ENCODE measurements at regions of chr12 and their contacts with region 1.

Region 1: GRCh38 chr12:119338593-119339363 is 4.2 kb downstream of the CCDC60 start:
- DNase-seq: no peak
- H3K4me3 ChIP-seq: no peak overlapping the region
- H3K27ac ChIP-seq: no peak overlapping the region
- H3K4me1 ChIP-seq: peaks cover 0 to 8% (median 3%) of the 10 kb centered on the region in 4 experiments; a peak in 3 of 7 replicates
- H3K27me3 ChIP-seq: peaks cover 26 to 61% (median 57%) of the 10 kb centered on the region in 4 experiments
- CTCF ChIP-seq: no peak
- EP300 ChIP-seq: no peak
- POLR2A ChIP-seq: no peak
- RAD21 ChIP-seq: no peak

Region 2: DNA sequence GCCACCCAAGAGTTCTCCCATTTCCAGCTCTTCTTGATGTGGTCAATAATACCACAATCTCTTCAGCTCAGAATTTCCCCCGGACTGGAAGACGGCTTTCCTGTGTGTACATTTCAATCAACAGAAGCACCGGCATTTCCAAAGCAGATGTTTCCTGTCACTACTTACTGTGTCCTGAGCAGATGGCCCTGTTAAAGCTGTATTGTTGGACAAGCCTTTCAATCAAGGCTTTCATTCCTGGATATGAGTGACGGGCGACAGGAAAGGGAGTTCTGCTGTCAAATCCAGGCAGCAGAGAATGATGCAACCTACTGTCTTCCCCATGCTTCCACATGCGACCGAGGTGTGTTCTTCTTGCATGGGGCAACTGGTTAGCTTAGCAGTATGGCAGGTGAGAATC is 80.6 kb before region 1 on chr12:
- CTCF ChIA-PET with region 1: no interaction called
- POLR2A ChIA-PET with region 1: no interaction called
- DNase-seq: no peak
- H3K4me3 ChIP-seq: no peak overlapping the region
- H3K27ac ChIP-seq: no peak overlapping the region
- H3K4me1 ChIP-seq: no peaks in the 10 kb centered on the region; a peak in 1 of 7 replicates
- H3K27me3 ChIP-seq: peaks cover 0 to 2% (median 0%) of the 10 kb centered on the region in 4 experiments; a peak in 1 of 7 replicates
- CTCF ChIP-seq: no peak
- EP300 ChIP-seq: no peak
- POLR2A ChIP-seq: no peak
- RAD21 ChIP-seq: no peak

Region 3: DNA sequence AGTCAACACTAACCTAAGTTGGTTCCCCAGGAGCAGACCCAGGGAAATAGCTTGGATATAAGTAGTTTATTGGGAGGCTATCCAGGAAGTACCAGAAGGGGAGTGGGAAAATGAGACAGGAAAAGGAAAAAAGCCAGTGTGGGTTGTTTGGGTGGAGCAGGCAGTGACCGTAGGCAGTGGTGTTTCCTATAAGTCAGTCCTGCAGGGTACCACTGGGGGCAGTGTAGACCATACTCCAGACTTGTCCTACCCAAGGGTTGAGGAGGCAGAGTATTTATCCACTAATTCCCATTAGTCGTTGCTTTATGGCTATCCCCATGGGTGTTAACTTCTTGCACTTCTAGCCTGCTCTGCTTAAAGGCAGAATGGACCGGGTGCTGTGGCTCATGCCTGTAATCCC is 10.7 kb before region 1 on chr12:
- CTCF ChIA-PET with region 1: interaction called, 11 read pairs
- POLR2A ChIA-PET with region 1: interaction called, 3 read pairs
- DNase-seq: peak in 1 of 2 experiments; percentile 77
- H3K4me3 ChIP-seq: no peak overlapping the region
- H3K27ac ChIP-seq: no peak overlapping the region
- H3K4me1 ChIP-seq: no peaks in the 10 kb centered on the region
- H3K27me3 ChIP-seq: peaks cover 0 to 3% (median 0%) of the 10 kb centered on the region in 4 experiments; a peak in 1 of 7 replicates
- CTCF ChIP-seq: peak; percentile 79 to 88 (median 79)
- EP300 ChIP-seq: no peak
- POLR2A ChIP-seq: no peak
- RAD21 ChIP-seq: peak; percentile 83 to 84

Region 4: GRCh38 chr12:119649202-119649808 is 310.5 kb after region 1 on chr12:
- CTCF ChIA-PET with region 1: no interaction called
- POLR2A ChIA-PET with region 1: no interaction called
- DNase-seq: no peak
- H3K4me3 ChIP-seq: no peak overlapping the region
- H3K27ac ChIP-seq: no peak overlapping the region
- H3K4me1 ChIP-seq: no peaks in the 10 kb centered on the region
- H3K27me3 ChIP-seq: no peaks in the 10 kb centered on the region
- CTCF ChIP-seq: peak in 2 of 3 experiments; percentile 50 to 74; a peak in 2 of 4 replicates
- EP300 ChIP-seq: no peak
- POLR2A ChIP-seq: no peak
- RAD21 ChIP-seq: peak; percentile 72

Measured in H1 (cell line).